ENCODE measurements at regions of chr20 and their contacts with region 1.

Region 1: DNA sequence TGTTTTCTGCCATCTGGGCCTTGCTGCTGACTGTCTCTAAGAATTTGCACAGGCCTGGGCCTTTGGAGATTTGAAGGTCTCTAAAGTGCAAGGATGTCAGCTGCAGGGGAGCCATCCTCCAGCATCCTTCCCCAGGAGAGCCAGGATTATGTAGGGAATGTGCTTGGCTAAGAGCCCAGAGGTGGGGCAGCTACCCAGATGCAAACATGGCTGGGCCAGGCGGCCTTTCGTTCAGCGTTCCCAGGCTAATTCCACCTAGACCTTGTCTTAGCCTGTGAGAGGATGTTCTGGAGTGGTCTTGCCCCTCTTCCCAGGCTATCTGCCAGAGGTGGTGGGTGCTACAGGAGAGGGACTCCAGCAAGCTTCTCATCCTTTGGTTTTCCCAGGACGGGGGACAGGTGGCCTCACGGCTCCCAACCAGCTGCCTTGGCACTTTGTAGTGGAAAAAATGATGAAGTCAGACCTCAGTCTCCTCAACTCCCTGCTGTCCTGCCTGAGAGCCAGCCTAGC is 7.7 kb upstream of the PTGIS start:
- DNase-seq: no peak
- H3K4me3 ChIP-seq: no peak overlapping the region
- H3K27ac ChIP-seq: no peak overlapping the region
- H3K4me1 ChIP-seq: no peaks in the 10 kb centered on the region
- H3K27me3 ChIP-seq: no peaks in the 10 kb centered on the region
- CTCF ChIP-seq: no peak

Region 2: GRCh38 chr20:49460916-49461315 is 114.7 kb before region 1 on chr20:
- CTCF ChIA-PET with region 1: no interaction called
- dilution Hi-C with region 1: loop called (anchors 5 kb)
- in situ Hi-C with region 1: no loop called
- intact Hi-C with region 1: no loop called
- DNase-seq: peak; percentile 81
- H3K4me3 ChIP-seq: no peak overlapping the region
- H3K27ac ChIP-seq: no peak overlapping the region
- H3K4me1 ChIP-seq: peaks cover 12% of the 10 kb centered on the region
- H3K27me3 ChIP-seq: peaks cover 6% of the 10 kb centered on the region
- CTCF ChIP-seq: no peak

Region 3: GRCh38 chr20:50189681-50190582 is 614.3 kb after region 1 on chr20:
- CTCF ChIA-PET with region 1: no interaction called
- dilution Hi-C with region 1: no loop called
- in situ Hi-C with region 1: no loop called
- intact Hi-C with region 1: no loop called
- DNase-seq: peak; percentile 69
- H3K4me3 ChIP-seq: peak overlapping the region in 2 of 3 experiments; percentile 89 to 99
- H3K27ac ChIP-seq: peak overlapping the region; percentile 68
- H3K4me1 ChIP-seq: peaks cover 18% of the 10 kb centered on the region
- H3K27me3 ChIP-seq: no peaks in the 10 kb centered on the region
- CTCF ChIP-seq: peak; percentile 25 to 70

Measured in mammary epithelial cell (primary cell).